Motor neuron (in vitro differentiated cells): ENCODE measurements at regions of chr17 and their contacts with region 1.

Region 1: GRCh38 chr17:27455914-27456680 is at the start of gene KSR1:
- ATAC-seq: peak; percentile 87 to 94 (median 91)
- H3K4me3 ChIP-seq: peak within 1 kb of the TSS; percentile 84 to 95 (median 92)
- H3K27ac ChIP-seq: peak within 1 kb of the TSS; percentile 77 to 87
- H3K4me1 ChIP-seq: peaks cover 16 to 21% of the 10 kb centered on the region in 2 donors
- total RNA-seq, gene KSR1: 11.2 to 34.1 (median 17.6) TPM

Region 2: DNA sequence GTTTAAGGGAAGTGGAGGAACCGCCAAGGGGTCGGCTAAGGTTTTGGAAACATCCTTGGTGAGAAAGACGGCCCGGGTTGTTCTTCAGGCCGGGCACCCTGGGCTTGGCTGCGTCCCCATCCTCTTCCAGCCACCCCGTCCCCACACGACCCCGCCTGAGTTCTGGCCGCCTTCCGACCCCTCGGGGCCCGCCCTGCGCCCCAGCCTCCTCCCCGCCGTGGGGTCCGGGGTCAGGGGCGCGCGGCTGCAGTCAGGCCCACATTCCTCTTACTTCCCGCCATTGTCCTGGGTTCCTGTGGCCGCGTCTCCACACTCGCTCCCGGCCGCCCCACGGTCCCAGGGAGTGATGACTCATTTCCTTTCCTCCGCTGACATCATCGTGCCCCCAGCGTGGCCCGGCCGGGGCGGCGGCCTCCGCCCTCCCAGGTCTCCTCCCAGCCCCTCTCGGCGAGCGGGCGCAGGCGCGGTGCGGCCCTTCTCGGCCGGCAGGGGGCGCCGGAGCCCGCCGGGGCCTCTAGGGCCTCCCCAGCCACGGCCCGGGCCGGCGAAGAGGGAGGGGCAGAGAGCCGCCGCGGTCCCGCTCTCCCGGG is 102.5 kb before region 1 on chr17:
- in situ Hi-C with region 1: loop called in 2 of 9 experiments (anchors 25 kb)
- ATAC-seq: peak; percentile 82 to 97 (median 94)
- H3K4me3 ChIP-seq: peak overlapping the region; percentile 37 to 57 (median 50)
- H3K27ac ChIP-seq: peak overlapping the region; percentile 83 to 92
- H3K4me1 ChIP-seq: peaks cover 7 to 9% of the 10 kb centered on the region in 2 donors

Region 3: GRCh38 chr17:27396941-27397340 is 59.2 kb before region 1 on chr17:
- in situ Hi-C with region 1: no loop called
- ATAC-seq: no peak
- H3K4me3 ChIP-seq: no peak overlapping the region
- H3K27ac ChIP-seq: no peak overlapping the region
- H3K4me1 ChIP-seq: no peaks in the 10 kb centered on the region

Region 4: GRCh38 chr17:27569257-27569722 is 113.2 kb after region 1 on chr17:
- in situ Hi-C with region 1: loop called in 1 of 9 experiments (anchors 25 kb)
- ATAC-seq: peak in 4 of 8 experiments; percentile 46 to 89 (median 49)
- H3K4me3 ChIP-seq: no peak overlapping the region
- H3K27ac ChIP-seq: no peak overlapping the region
- H3K4me1 ChIP-seq: peaks cover 0 to 9% of the 10 kb centered on the region in 2 donors